GM12878 (cell line): ENCODE measurements at regions of chr4 and their contacts with region 1.

Region 1: DNA sequence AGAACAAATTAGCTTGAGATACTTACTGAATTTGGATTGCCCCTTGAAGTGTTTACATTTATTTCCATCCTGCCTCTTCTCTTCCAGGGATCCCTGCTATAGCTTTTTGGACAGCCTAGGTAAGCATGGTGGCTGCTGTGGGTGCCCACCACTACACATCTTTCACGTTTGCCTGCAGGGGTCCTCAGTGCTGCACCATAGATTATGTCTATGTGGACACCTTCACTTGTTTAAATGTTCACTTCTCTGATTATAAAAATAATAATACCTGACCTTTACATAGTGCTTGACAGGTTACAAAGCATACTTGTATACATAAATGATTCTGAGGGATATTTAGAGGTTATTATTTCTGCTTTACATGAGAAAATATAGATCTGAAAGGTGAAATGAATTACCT is 67.9 kb upstream of the SLC4A4 start:
- DNase-seq: no peak
- ATAC-seq: peak; percentile 76
- H3K4me3 ChIP-seq: no peak overlapping the region
- H3K27ac ChIP-seq: no peak overlapping the region
- H3K4me1 ChIP-seq: peaks cover 3% of the 10 kb centered on the region; the same call in 1 of the 2 replicates
- H3K27me3 ChIP-seq: no peaks in the 10 kb centered on the region
- CTCF ChIP-seq: peak; percentile 41 to 62 (median 41); a peak in 4 of 6 replicates
- EP300 ChIP-seq: no peak
- POLR2A ChIP-seq: no peak
- RAD21 ChIP-seq: peak; percentile 74

Region 2: DNA sequence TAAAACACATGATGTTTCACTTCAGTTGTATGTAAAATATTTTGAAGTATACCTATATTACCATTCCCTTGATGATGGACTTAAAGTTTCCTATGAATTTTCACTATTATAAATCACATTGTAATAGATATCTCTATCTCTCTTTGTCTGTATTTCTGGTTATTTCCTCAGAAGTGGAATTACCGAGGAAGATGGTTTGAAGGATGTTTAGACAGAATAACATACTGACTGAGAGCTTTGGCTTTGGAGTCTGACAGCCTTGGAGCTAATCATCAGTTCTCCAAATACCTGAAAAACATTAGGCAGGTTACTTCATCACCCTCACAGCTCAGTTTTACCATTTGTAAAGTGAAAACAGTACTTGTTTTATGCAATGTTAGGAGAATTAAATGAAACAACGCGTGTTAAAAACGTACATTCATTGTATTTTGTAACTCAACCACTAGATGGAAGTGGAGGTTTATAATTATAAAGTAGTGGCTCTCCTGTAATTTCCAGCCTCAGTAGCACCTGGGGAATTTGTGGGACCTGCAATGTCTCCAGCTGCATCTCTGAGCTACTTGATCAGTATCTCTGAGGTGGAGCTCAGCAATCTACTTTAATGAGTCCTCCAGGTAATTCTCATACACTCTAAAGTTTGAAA is 618.9 kb before region 1 on chr4:
- CTCF ChIA-PET with region 1: interaction called, 6 read pairs
- POLR2A ChIA-PET with region 1: no interaction called
- RAD21 ChIA-PET with region 1: no interaction called
- SMC1A ChIA-PET with region 1: no interaction called
- in situ Hi-C with region 1: no loop called
- intact Hi-C with region 1: loop called (anchors 10 kb)
- DNase-seq: no peak
- ATAC-seq: peak; percentile 68
- H3K4me3 ChIP-seq: no peak overlapping the region
- H3K27ac ChIP-seq: no peak overlapping the region
- H3K4me1 ChIP-seq: no peaks in the 10 kb centered on the region
- H3K27me3 ChIP-seq: no peaks in the 10 kb centered on the region
- CTCF ChIP-seq: peak; percentile 20 to 60 (median 52); a peak in 4 of 6 replicates
- EP300 ChIP-seq: no peak
- POLR2A ChIP-seq: no peak
- RAD21 ChIP-seq: peak; percentile 72

Region 3: GRCh38 chr4:71229477-71230270 is 41.2 kb before region 1 on chr4:
- CTCF ChIA-PET with region 1: interaction called, 9 read pairs
- POLR2A ChIA-PET with region 1: no interaction called
- RAD21 ChIA-PET with region 1: interaction called, 7 read pairs
- SMC1A ChIA-PET with region 1: interaction called, 20 read pairs
- in situ Hi-C with region 1: no loop called
- intact Hi-C with region 1: no loop called
- DNase-seq: no peak
- ATAC-seq: peak; percentile 78
- H3K4me3 ChIP-seq: no peak overlapping the region
- H3K27ac ChIP-seq: no peak overlapping the region
- H3K4me1 ChIP-seq: no peaks in the 10 kb centered on the region
- H3K27me3 ChIP-seq: peaks cover 0 to 2% of the 10 kb centered on the region in 2 experiments; a peak in 2 of 4 replicates
- CTCF ChIP-seq: peak; percentile 40 to 66 (median 66)
- EP300 ChIP-seq: no peak
- POLR2A ChIP-seq: no peak
- RAD21 ChIP-seq: peak; percentile 86

Region 4: DNA sequence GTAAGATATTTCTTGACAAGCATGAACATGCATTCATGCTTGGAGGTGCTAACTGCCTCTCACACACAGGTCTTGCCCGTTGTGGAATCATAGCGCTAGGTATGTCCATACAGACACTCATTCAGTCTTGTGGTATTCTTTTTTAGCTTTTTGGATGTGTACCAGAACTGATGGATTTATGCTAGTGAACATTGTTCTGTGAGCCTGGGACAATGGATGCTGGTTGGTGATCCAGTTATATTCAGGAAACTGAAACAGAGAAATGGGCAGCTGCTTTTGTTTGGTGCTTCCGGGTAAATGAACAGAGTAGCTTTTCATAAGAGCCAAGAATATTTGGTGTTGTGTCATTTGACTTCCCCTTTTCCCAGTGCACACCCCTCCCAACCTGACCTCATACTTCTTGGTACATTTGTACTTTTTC is 11.0 kb before region 1 on chr4:
- CTCF ChIA-PET with region 1: interaction called, 34 read pairs
- POLR2A ChIA-PET with region 1: interaction called, 3 read pairs
- RAD21 ChIA-PET with region 1: interaction called, 11 read pairs
- SMC1A ChIA-PET with region 1: interaction called, 17 read pairs
- in situ Hi-C with region 1: no loop called
- intact Hi-C with region 1: no loop called
- DNase-seq: no peak
- ATAC-seq: peak; percentile 44
- H3K4me3 ChIP-seq: no peak overlapping the region
- H3K27ac ChIP-seq: no peak overlapping the region
- H3K4me1 ChIP-seq: no peaks in the 10 kb centered on the region
- H3K27me3 ChIP-seq: no peaks in the 10 kb centered on the region
- CTCF ChIP-seq: no peak
- EP300 ChIP-seq: no peak
- POLR2A ChIP-seq: no peak
- RAD21 ChIP-seq: no peak

Region 5: GRCh38 chr4:71415491-71415890 is 144.6 kb after region 1 on chr4:
- CTCF ChIA-PET with region 1: no interaction called
- POLR2A ChIA-PET with region 1: no interaction called
- RAD21 ChIA-PET with region 1: no interaction called
- SMC1A ChIA-PET with region 1: no interaction called
- in situ Hi-C with region 1: no loop called
- intact Hi-C with region 1: no loop called
- DNase-seq: no peak
- ATAC-seq: no peak
- H3K4me3 ChIP-seq: no peak overlapping the region
- H3K27ac ChIP-seq: no peak overlapping the region
- H3K4me1 ChIP-seq: no peaks in the 10 kb centered on the region
- H3K27me3 ChIP-seq: no peaks in the 10 kb centered on the region
- CTCF ChIP-seq: no peak
- EP300 ChIP-seq: no peak
- POLR2A ChIP-seq: no peak
- RAD21 ChIP-seq: no peak

Region 6: GRCh38 chr4:71553605-71554004 is 282.7 kb after region 1 on chr4:
- CTCF ChIA-PET with region 1: interaction called, 5 read pairs
- POLR2A ChIA-PET with region 1: no interaction called
- RAD21 ChIA-PET with region 1: no interaction called
- SMC1A ChIA-PET with region 1: interaction called, 5 read pairs
- in situ Hi-C with region 1: no loop called
- intact Hi-C with region 1: loop called (anchors 5 kb)
- DNase-seq: no peak
- ATAC-seq: peak; percentile 66
- H3K4me3 ChIP-seq: no peak overlapping the region
- H3K27ac ChIP-seq: no peak overlapping the region
- H3K4me1 ChIP-seq: no peaks in the 10 kb centered on the region
- H3K27me3 ChIP-seq: no peaks in the 10 kb centered on the region; a peak in 1 of 4 replicates
- CTCF ChIP-seq: peak in 2 of 3 experiments; percentile 37 to 39; a peak in 3 of 6 replicates
- EP300 ChIP-seq: no peak
- POLR2A ChIP-seq: no peak
- RAD21 ChIP-seq: peak; percentile 69

Region 7: GRCh38 chr4:72112514-72113156 is 841.7 kb after region 1 on chr4:
- CTCF ChIA-PET with region 1: no interaction called
- POLR2A ChIA-PET with region 1: no interaction called
- RAD21 ChIA-PET with region 1: no interaction called
- SMC1A ChIA-PET with region 1: no interaction called
- in situ Hi-C with region 1: no loop called
- intact Hi-C with region 1: loop called (anchors 5 kb)
- DNase-seq: peak; percentile 88
- ATAC-seq: peak; percentile 94
- H3K4me3 ChIP-seq: no peak overlapping the region
- H3K27ac ChIP-seq: peak overlapping the region; percentile 32; the same call in 1 of the 2 replicates
- H3K4me1 ChIP-seq: no peaks in the 10 kb centered on the region; the same call in 1 of the 2 replicates
- H3K27me3 ChIP-seq: no peaks in the 10 kb centered on the region
- CTCF ChIP-seq: no peak
- EP300 ChIP-seq: peak; percentile 100
- POLR2A ChIP-seq: no peak
- RAD21 ChIP-seq: 0 out of 2 replicates have a peak, but pooled peaks have one; percentile 4